Thyroid gland (tissue), 4 donors: ENCODE measurements at regions of chr2 and their contacts with region 1.

Region 1: DNA sequence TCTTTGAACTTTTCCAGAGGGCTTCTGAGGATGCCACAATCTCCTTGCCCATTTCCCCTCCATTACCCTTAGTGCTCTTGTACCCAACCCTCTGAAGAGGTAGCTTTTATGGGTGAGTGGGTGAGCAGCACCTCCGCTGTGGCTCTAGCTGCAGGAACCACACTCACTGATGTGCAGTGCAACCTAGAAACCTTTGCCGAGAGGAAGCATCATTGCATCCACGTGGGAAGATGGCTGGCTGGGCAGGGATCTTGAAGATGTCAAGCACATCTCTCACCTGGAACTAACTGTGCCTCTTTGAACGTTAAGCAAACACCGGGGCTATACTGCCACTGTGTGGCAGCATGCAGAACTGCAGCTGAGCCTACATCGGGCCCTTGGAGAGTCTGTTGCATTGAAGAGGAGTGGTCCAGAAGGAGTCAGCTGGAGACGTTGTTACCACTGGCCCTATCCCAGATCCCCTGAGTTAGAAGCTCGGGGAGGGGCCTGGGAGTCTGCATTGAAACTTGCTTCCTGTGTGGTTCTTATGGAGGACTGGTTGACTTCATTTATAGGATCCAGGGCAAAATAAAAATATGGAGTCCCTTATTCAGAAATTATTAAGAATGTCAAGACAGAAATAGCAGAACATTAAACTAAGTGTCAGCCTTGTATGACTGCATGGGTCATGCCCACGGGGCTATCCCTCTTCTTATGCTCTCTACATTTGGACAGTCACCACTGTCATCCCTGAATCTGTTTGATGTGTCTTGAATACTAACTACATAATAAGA is 28.7 kb downstream of the IGFBP5 start:
- DNase-seq: peak; percentile 72 to 73
- H3K4me3 ChIP-seq: no peak overlapping the region
- H3K27ac ChIP-seq: no peak overlapping the region
- H3K4me1 ChIP-seq: peaks cover 0 to 13% of the 10 kb centered on the region in 2 donors
- H3K27me3 ChIP-seq: no peaks in the 10 kb centered on the region
- CTCF ChIP-seq: peak; percentile 93 to 98 (median 96)
- POLR2A ChIP-seq: no peak

Region 2: DNA sequence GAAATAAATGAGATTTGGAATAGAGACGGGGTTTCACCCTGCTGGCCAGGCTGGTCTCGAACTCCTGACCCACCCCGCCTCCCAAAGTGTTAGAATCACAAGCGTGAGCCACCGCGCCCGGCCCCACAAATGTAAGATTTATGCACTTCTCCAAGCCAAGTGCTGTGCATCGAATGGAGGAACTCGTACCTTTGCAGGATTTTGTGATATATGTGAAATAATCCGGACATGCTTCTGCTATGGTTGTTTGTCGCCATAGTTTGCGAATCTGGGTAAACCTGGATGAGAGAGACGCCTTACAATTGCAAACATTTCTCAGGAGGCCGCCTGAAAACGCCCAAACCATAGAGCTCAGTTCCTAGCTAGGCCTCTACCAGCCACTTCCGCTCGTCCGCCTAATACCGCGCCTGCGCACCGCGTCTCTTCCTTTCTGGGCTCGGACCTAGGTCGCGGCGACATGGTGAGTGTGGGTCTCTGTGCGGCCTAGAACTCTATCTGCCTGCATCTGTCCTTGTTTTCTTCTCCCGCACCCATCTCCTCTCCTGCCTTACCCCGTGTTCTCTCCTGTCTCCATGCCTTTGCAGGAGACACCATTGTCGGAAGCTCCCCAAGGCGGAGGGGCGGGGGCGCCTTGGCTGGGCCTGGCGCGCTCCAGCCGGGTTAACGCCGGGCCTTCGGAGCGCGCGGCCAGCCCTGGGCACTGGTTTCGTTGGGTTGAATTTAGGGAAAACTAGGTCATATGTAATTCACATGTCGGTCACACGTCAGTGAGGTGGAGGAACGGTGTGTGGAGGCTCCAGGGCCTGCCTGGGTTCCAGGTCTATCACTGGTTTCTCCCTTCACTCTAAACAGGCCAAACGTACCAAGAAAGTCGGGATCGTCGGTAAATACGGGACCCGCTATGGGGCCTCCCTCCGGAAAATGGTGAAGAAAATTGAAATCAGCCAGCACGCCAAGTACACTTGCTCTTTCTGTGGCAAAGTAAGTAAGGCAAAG is 167.9 kb before region 1 on chr2 and contains the start of gene RPL37A:
- intact Hi-C with region 1: no loop called
- DNase-seq: peak; percentile 92 to 94
- H3K4me3 ChIP-seq: peak within 1 kb of the TSS; percentile 25 to 92 (median 51)
- H3K27ac ChIP-seq: peak within 1 kb of the TSS; percentile 77 to 96 (median 82)
- H3K4me1 ChIP-seq: peaks cover 21 to 22% of the 10 kb centered on the region in 2 donors
- H3K27me3 ChIP-seq: no peaks in the 10 kb centered on the region
- CTCF ChIP-seq: peak in 1 of 6 experiments; percentile 12
- POLR2A ChIP-seq: peak; percentile 18 to 92
- total RNA-seq, gene RPL37A: 393 to 1,147 (median 736) TPM

Region 3: DNA sequence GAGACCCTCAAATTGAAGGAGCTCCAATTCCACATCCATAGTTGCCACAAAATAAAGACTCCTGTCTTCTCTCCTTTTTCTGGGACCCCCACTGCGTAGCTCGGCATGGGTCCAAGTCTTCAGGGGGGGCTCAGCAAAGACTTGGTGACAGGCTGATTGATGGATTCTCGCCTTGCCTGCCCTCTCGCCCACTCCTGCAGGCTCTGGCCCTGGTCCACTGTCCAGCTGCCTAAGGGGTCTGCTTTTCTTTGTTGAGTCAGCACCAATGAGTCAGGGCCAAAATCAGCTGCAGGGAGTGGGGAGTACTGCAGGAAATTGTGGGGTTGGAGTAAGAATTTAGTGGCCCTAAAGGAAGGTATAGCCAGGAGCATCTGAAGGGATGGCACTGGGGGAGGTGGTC is 146.5 kb before region 1 on chr2:
- intact Hi-C with region 1: loop called (anchors 2 kb)
- DNase-seq: no peak
- H3K4me3 ChIP-seq: no peak overlapping the region
- H3K27ac ChIP-seq: no peak overlapping the region
- H3K4me1 ChIP-seq: peaks cover 0 to 4% of the 10 kb centered on the region in 2 donors
- H3K27me3 ChIP-seq: no peaks in the 10 kb centered on the region
- CTCF ChIP-seq: no peak
- POLR2A ChIP-seq: no peak

Region 4: DNA sequence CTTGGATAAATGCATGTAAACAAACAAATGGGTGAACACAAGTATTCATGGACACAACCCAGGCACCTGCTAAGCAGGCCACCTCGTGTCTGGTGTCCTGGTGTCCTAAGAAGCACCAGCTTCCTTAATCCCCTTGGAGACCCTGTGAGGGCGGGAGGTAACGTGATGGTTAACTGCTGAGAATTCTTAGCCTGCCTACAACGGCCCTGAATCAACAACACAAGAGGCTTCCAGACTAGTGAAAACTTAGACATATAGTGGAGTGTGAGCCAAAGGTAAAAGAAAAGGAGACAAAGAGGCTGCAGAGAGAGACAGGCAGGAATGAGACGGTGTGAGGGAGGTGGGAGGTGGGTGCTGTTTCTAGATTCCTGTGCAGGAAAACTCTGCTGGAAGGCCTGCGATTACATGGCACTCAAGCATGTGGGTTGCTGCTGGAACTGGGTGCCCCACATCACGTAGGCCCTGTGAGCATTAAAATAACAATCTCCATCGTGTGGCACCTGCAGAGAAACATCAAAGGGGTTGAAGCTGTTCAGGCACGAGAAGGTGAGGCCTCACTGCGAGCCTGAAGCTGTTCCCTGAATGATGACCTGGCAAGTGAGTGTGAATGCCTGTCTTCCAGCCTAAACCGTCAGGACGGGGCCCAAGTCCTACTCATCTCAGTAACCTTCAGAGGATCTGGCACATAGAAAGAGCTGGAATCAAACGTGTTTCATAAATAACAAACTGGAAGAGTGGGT is 103.8 kb before region 1 on chr2:
- intact Hi-C with region 1: no loop called
- DNase-seq: no peak
- H3K4me3 ChIP-seq: no peak overlapping the region
- H3K27ac ChIP-seq: no peak overlapping the region
- H3K4me1 ChIP-seq: peaks cover 3 to 7% of the 10 kb centered on the region in 2 donors
- H3K27me3 ChIP-seq: no peaks in the 10 kb centered on the region
- CTCF ChIP-seq: no peak
- POLR2A ChIP-seq: no peak

Region 5: DNA sequence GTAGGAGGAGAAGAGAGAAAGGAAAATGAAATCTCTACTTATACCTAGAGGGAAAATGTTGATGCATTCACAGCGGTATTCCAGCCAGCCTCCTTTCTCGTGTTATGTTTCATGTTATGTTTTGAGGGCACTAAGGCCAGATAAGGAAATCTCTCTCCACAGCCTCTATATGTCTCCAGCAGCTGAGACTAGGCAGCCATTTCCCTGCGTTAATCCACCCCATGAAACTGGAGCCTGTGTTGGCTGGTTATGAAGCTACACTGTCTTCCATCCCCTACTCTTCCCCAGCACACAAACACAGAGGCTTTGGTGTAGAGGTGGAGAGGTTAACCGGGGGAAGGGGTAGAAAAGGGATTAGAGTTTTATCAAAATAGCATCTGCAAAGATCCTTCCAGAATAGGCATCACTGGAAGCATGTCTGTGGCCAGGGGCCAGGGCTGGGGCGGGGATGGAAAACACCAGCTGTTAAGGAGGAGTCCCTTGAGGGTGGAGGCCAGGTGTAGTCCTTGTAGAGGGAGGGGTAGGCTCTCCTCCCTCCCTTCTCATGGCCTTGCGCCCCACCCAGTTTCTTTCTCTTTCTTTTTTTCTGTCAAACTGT is 294.1 kb after region 1 on chr2:
- intact Hi-C with region 1: no loop called
- DNase-seq: no peak
- H3K4me3 ChIP-seq: no peak overlapping the region
- H3K27ac ChIP-seq: no peak overlapping the region
- H3K4me1 ChIP-seq: peaks cover 0 to 4% of the 10 kb centered on the region in 2 donors
- H3K27me3 ChIP-seq: no peaks in the 10 kb centered on the region
- CTCF ChIP-seq: no peak
- POLR2A ChIP-seq: no peak

Region 6: DNA sequence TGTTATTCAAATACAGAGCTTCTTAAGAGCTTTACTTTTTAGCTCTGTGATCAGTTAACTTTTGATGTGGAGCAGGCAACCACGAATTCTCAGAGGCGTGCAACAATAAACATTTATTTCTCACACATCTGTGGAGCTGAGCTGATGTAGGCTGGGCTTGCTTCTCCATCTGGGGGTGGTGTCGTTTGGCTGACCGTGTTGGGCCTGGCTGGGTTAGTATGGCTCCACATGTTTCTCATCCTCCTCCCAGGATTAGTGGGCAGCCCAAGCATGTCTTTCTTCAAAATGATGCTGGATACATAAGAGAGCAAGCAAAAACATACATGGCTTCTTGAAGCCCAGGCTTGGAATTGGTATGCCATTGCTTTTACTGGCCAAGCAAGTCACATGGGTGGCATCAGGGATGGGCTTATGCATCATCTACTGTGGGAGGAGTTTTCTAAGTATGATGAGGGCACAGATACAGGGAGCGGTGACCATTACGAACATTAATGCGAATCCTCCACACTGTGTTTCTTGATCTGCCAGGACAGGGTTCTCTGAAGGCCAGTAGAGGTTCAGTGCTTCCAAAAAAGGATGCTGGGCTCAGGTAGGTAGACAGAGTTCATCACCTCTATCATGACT is 350.3 kb after region 1 on chr2:
- intact Hi-C with region 1: no loop called
- DNase-seq: no peak
- H3K4me3 ChIP-seq: no peak overlapping the region
- H3K27ac ChIP-seq: no peak overlapping the region
- H3K4me1 ChIP-seq: no peaks in the 10 kb centered on the region
- H3K27me3 ChIP-seq: no peaks in the 10 kb centered on the region
- CTCF ChIP-seq: no peak
- POLR2A ChIP-seq: no peak